ENCODE measurements at regions of chr22 and their contacts with region 1.

Region 1: GRCh38 chr22:22207845-22208564 is 36.6 kb upstream of the VPREB1 start:
- DNase-seq: peak; percentile 53
- ATAC-seq: peak; percentile 97
- H3K4me3 ChIP-seq: no peak overlapping the region
- H3K27ac ChIP-seq: no peak overlapping the region
- H3K4me1 ChIP-seq: no peaks in the 10 kb centered on the region
- H3K27me3 ChIP-seq: peaks cover 0 to 15% of the 10 kb centered on the region in 2 experiments; a peak in 1 of 5 replicates
- CTCF ChIP-seq: peak; percentile 85
- EP300 ChIP-seq: no peak
- POLR2A ChIP-seq: no peak
- RAD21 ChIP-seq: peak; percentile 84

Region 2: DNA sequence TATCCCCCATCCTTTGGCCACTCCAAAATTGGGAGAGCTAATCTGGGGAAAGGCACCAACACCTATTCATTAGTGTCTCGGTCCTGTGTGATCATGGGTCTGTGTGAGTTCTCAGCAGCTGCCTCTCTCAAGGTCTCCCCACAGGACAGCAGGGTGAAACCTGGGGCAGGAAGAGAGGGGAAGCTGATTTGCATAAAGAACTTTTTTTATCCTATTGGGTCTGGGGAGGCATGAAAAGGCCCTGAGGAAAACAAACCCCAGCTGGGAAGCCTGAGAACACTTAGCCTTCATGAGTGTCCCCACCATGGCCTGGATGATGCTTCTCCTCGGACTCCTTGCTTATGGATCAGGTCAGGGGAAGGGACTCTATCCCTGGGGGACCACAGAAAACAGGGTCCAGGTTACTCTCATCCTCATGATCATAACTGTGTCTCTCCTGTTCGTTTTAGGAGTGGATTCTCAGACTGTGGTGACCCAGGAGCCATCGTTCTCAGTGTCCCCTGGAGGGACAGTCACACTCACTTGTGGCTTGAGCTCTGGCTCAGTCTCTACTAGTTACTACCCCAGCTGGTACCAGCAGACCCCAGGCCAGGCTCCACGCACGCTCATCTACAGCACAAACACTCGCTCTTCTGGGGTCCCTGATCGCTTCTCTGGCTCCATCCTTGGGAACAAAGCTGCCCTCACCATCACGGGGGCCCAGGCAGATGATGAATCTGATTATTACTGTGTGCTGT is 109.4 kb before region 1 on chr22:
- CTCF ChIA-PET with region 1: no interaction called
- POLR2A ChIA-PET with region 1: no interaction called
- in situ Hi-C with region 1: no loop called
- intact Hi-C with region 1: no loop called
- DNase-seq: no peak
- ATAC-seq: no peak
- H3K4me3 ChIP-seq: no peak overlapping the region
- H3K27ac ChIP-seq: no peak overlapping the region
- H3K4me1 ChIP-seq: no peaks in the 10 kb centered on the region
- H3K27me3 ChIP-seq: peaks cover 0 to 40% of the 10 kb centered on the region in 2 experiments; a peak in 2 of 5 replicates
- CTCF ChIP-seq: no peak
- EP300 ChIP-seq: no peak
- POLR2A ChIP-seq: no peak
- RAD21 ChIP-seq: no peak

Region 3: DNA sequence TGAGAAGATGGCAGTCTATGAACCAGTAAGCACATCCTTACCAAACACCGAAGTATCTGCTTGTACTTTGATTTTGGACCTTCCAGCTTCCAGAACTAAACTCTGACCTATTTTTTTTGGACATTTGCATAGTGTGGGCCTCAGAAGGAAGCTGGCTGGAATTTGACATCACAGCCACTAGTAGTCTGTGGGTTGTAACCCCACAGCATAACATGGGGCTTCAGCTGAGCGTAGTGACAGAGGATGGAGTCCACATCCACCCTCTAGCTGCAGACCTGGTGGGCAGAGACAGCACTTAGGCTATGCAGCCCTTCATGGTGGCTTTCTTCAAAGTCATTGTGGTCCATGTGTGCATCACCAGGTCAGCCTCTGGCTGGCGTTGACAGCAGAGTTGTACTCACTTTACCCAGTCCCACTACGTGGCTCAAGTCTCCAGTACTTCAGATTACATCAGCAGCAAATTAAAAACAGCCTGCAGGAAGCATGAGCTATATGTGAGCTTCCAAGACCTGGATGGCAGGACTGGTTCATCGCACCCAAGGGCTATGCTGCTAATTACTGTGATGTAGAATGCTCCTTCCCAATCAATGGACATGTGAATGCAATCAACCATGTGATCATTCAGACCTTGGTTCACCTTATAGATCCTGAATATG is 22.0 kb before region 1 on chr22:
- CTCF ChIA-PET with region 1: no interaction called
- POLR2A ChIA-PET with region 1: no interaction called
- in situ Hi-C with region 1: no loop called
- intact Hi-C with region 1: no loop called
- DNase-seq: no peak
- ATAC-seq: no peak
- H3K4me3 ChIP-seq: no peak overlapping the region
- H3K27ac ChIP-seq: no peak overlapping the region
- H3K4me1 ChIP-seq: peaks cover 9% of the 10 kb centered on the region
- H3K27me3 ChIP-seq: peaks cover 0 to 22% of the 10 kb centered on the region in 2 experiments; a peak in 2 of 5 replicates
- CTCF ChIP-seq: no peak
- EP300 ChIP-seq: no peak
- POLR2A ChIP-seq: no peak
- RAD21 ChIP-seq: no peak

Region 4: GRCh38 chr22:22226448-22227187 is 18.6 kb after region 1 on chr22:
- CTCF ChIA-PET with region 1: no interaction called
- POLR2A ChIA-PET with region 1: no interaction called
- in situ Hi-C with region 1: no loop called
- intact Hi-C with region 1: no loop called
- DNase-seq: no peak
- ATAC-seq: no peak
- H3K4me3 ChIP-seq: no peak overlapping the region
- H3K27ac ChIP-seq: no peak overlapping the region
- H3K4me1 ChIP-seq: no peaks in the 10 kb centered on the region
- H3K27me3 ChIP-seq: peaks cover 3% of the 10 kb centered on the region in 2 experiments; a peak in 1 of 5 replicates
- CTCF ChIP-seq: no peak
- EP300 ChIP-seq: no peak
- POLR2A ChIP-seq: no peak
- RAD21 ChIP-seq: no peak

Region 5: GRCh38 chr22:22322792-22323191 is 114.8 kb after region 1 on chr22:
- CTCF ChIA-PET with region 1: interaction called, 24 read pairs
- POLR2A ChIA-PET with region 1: no interaction called
- in situ Hi-C with region 1: loop called (anchors 25 kb)
- intact Hi-C with region 1: loop called (anchors 1 kb)
- DNase-seq: no peak
- ATAC-seq: no peak
- H3K4me3 ChIP-seq: no peak overlapping the region
- H3K27ac ChIP-seq: no peak overlapping the region
- H3K4me1 ChIP-seq: no peaks in the 10 kb centered on the region
- H3K27me3 ChIP-seq: no peaks in the 10 kb centered on the region
- CTCF ChIP-seq: no peak
- EP300 ChIP-seq: no peak
- POLR2A ChIP-seq: no peak
- RAD21 ChIP-seq: no peak

Region 6: DNA sequence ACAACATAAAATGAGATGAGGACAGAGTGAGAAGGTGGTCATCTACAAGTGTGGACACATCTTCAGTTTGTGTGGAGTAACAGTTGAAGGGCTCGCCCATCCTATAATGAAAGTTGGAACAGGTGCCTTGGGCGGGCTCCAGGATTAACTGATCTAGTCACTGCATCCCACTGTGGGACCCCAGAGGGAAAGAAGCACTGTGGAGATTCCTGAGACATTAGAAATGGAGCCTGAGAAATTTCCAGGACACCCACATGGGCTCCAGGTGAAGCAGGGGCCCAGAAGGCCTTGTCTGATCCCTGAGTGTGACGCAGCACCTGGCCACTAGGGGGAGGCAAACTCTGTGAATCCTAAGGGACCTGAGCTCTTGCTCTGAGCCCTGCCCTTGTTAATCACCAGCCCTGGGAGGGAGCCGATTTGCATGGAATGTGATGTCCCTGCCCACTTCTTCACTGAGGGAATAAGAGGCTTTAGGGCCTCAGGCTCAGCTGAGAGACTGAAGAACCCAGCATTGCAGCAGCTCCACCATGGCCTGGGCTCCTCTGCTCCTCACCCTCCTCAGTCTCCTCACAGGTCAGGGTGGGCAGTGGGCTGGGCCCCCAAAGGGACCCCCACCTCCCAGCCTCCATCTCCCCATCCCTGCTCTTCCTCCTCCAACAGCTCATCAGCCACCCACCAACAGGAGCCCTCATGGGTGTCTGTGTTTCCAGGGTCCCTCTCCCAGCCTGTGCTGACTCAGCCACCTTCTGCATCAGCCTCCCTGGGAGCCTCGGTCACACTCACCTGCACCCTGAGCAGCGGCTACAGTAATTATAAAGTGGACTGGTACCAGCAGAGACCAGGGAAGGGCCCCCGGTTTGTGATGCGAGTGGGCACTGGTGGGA is 134.9 kb after region 1 on chr22:
- CTCF ChIA-PET with region 1: interaction called, 3 read pairs
- POLR2A ChIA-PET with region 1: no interaction called
- in situ Hi-C with region 1: loop called (anchors 25 kb)
- intact Hi-C with region 1: no loop called
- DNase-seq: peak; percentile 54
- ATAC-seq: peak; percentile 96
- H3K4me3 ChIP-seq: no peak overlapping the region
- H3K27ac ChIP-seq: no peak overlapping the region
- H3K4me1 ChIP-seq: no peaks in the 10 kb centered on the region
- H3K27me3 ChIP-seq: peaks cover 1 to 11% of the 10 kb centered on the region in 2 experiments; a peak in 1 of 5 replicates
- CTCF ChIP-seq: peak; percentile 81
- EP300 ChIP-seq: no peak
- POLR2A ChIP-seq: no peak
- RAD21 ChIP-seq: no peak

Measured in HepG2 (cell line).